IMR-90 (cell line): ENCODE measurements at regions of chr11 and their contacts with region 1.

Region 1: GRCh38 chr11:17887779-17888178 is 125.1 kb downstream of the SERGEF start:
- DNase-seq: no peak
- ATAC-seq: no peak
- H3K4me3 ChIP-seq: no peak overlapping the region
- H3K27ac ChIP-seq: no peak overlapping the region
- H3K4me1 ChIP-seq: no peaks in the 10 kb centered on the region
- H3K27me3 ChIP-seq: no peaks in the 10 kb centered on the region
- CTCF ChIP-seq: no peak
- POLR2A ChIP-seq: no peak
- RAD21 ChIP-seq: no peak

Region 2: GRCh38 chr11:17827006-17827405 is 60.8 kb before region 1 on chr11:
- CTCF ChIA-PET with region 1: no interaction called
- POLR2A ChIA-PET with region 1: no interaction called
- dilution Hi-C with region 1: no loop called
- in situ Hi-C with region 1: no loop called
- intact Hi-C with region 1: loop called (anchors 10 kb)
- DNase-seq: no peak
- ATAC-seq: no peak
- H3K4me3 ChIP-seq: no peak overlapping the region
- H3K27ac ChIP-seq: no peak overlapping the region
- H3K4me1 ChIP-seq: peaks cover 10% of the 10 kb centered on the region
- H3K27me3 ChIP-seq: no peaks in the 10 kb centered on the region
- CTCF ChIP-seq: peak; percentile 24; the same call in 1 of the 2 replicates
- POLR2A ChIP-seq: no peak
- RAD21 ChIP-seq: 0 out of 2 replicates have a peak, but pooled peaks have one; percentile 4